ENCODE measurements at regions of chr20 and their contacts with region 1.

Region 1: GRCh38 chr20:57596998-57597939 is 23.0 kb downstream of the ZBP1 start:
- DNase-seq: peak; percentile 88
- ATAC-seq: peak; percentile 86
- H3K4me3 ChIP-seq: peak overlapping the region in 4 of 5 experiments; percentile 23 to 48 (median 35)
- H3K4me3 Mint-ChIP-seq: no peak overlapping the region
- H3K27ac ChIP-seq: no peak overlapping the region
- H3K27ac Mint-ChIP-seq: no peak overlapping the region
- H3K4me1 ChIP-seq: peaks cover 10 to 26% of the 10 kb centered on the region in 2 donors
- H3K4me1 Mint-ChIP-seq: peaks cover 18% of the 10 kb centered on the region
- H3K27me3 ChIP-seq: peaks cover 0 to 14% (median 2%) of the 10 kb centered on the region in 4 experiments
- H3K27me3 Mint-ChIP-seq: peaks cover 5% of the 10 kb centered on the region
- CTCF ChIP-seq: peak; percentile 97

Region 2: GRCh38 chr20:57351042-57351783 is 246.1 kb before region 1 on chr20 and contains the start of gene RAE1:
- CTCF ChIA-PET with region 1: interaction called, 3 read pairs
- POLR2A ChIA-PET with region 1: no interaction called
- intact Hi-C with region 1: loop called (anchors 1 kb)
- DNase-seq: peak; percentile 94
- ATAC-seq: peak; percentile 84
- H3K4me3 ChIP-seq: peak within 1 kb of the TSS; percentile 68 to 99 (median 89)
- H3K4me3 Mint-ChIP-seq: peak within 1 kb of the TSS; percentile 92
- H3K27ac ChIP-seq: peak within 1 kb of the TSS; percentile 58 to 81
- H3K27ac Mint-ChIP-seq: peak within 1 kb of the TSS; percentile 92
- H3K4me1 ChIP-seq: peaks cover 9 to 18% of the 10 kb centered on the region in 2 donors
- H3K4me1 Mint-ChIP-seq: peaks cover 22% of the 10 kb centered on the region
- H3K27me3 ChIP-seq: no peaks in the 10 kb centered on the region
- H3K27me3 Mint-ChIP-seq: no peaks in the 10 kb centered on the region
- CTCF ChIP-seq: no peak
- total RNA-seq, gene RAE1: 32.6 and 36.4 TPM in 2 replicates

Region 3: DNA sequence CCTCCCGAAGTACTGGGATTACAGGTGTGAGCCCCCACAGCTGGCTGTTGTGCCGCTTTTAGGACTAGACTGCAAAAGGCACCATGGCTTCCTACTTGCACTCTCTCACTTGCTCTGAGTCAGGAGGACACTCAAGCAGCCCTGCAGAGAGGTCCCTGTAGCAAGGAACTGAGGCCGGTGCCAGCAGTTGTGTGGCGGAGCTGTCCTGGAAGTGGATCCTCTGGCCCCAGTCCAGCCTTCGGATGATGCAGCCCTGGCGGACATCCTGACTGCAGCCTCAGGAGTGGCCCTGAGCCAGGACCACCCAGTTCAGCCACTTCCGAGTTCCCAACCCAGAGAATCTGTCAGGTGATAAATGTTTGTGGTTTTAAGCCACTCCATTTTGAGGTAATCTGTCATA is 89.8 kb before region 1 on chr20:
- CTCF ChIA-PET with region 1: interaction called, 15 read pairs
- POLR2A ChIA-PET with region 1: no interaction called
- intact Hi-C with region 1: no loop called
- DNase-seq: no peak
- ATAC-seq: no peak
- H3K4me3 ChIP-seq: no peak overlapping the region
- H3K4me3 Mint-ChIP-seq: no peak overlapping the region
- H3K27ac ChIP-seq: no peak overlapping the region
- H3K27ac Mint-ChIP-seq: no peak overlapping the region
- H3K4me1 ChIP-seq: peaks cover 23 to 32% of the 10 kb centered on the region in 2 donors
- H3K4me1 Mint-ChIP-seq: peaks cover 31% of the 10 kb centered on the region
- H3K27me3 ChIP-seq: peaks cover 0 to 4% (median 0%) of the 10 kb centered on the region in 4 experiments
- H3K27me3 Mint-ChIP-seq: no peaks in the 10 kb centered on the region
- CTCF ChIP-seq: no peak

Region 4: DNA sequence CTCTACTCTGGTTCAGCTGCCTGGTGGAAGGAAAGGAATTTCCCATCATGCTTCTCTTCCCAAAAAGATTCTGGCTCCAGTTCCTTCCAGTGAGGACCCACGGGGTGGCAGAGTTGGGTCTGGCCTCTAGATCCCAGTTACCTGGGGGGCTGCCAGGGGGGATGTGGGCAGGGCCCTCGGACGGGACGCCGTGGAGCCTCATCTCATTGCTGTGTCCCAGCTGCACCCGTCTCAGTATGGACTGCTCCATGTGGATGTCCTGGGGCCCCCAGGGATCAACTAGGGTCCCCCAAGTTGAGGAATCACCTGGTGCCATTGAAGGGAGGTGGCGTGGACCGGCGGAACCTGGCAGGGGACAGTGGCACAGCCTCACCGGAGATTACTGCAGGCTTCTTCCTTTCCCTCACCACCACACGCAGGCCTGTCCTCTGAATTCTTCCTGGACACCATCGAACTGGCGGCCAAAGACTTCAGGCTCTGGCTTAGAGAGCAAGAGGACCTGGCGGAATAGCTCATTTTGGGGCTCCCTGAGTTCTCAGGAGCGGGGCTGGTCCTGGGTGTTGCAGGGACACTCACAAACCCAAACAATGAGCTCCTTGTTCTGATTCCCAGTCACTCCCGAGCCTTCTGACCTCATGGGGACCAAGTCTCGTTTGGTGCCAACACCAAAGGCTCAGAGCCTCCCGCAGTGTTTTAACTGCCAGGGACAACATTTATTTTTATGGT is 14.5 kb after region 1 on chr20:
- CTCF ChIA-PET with region 1: interaction called, 131 read pairs
- POLR2A ChIA-PET with region 1: interaction called, 3 read pairs
- intact Hi-C with region 1: no loop called
- DNase-seq: no peak
- ATAC-seq: no peak
- H3K4me3 ChIP-seq: no peak overlapping the region
- H3K4me3 Mint-ChIP-seq: no peak overlapping the region
- H3K27ac ChIP-seq: no peak overlapping the region
- H3K27ac Mint-ChIP-seq: no peak overlapping the region
- H3K4me1 ChIP-seq: peaks cover 5 to 15% of the 10 kb centered on the region in 2 donors
- H3K4me1 Mint-ChIP-seq: peaks cover 17% of the 10 kb centered on the region
- H3K27me3 ChIP-seq: no peaks in the 10 kb centered on the region
- H3K27me3 Mint-ChIP-seq: no peaks in the 10 kb centered on the region
- CTCF ChIP-seq: no peak

Region 5: GRCh38 chr20:57654363-57654997 is 57.2 kb after region 1 on chr20:
- CTCF ChIA-PET with region 1: interaction called, 24 read pairs
- POLR2A ChIA-PET with region 1: no interaction called
- intact Hi-C with region 1: loop called (anchors 1 kb)
- DNase-seq: peak; percentile 85
- ATAC-seq: peak; percentile 94
- H3K4me3 ChIP-seq: no peak overlapping the region
- H3K4me3 Mint-ChIP-seq: no peak overlapping the region
- H3K27ac ChIP-seq: no peak overlapping the region
- H3K27ac Mint-ChIP-seq: no peak overlapping the region
- H3K4me1 ChIP-seq: peaks cover 4 to 18% of the 10 kb centered on the region in 2 donors
- H3K4me1 Mint-ChIP-seq: peaks cover 34% of the 10 kb centered on the region
- H3K27me3 ChIP-seq: no peaks in the 10 kb centered on the region
- H3K27me3 Mint-ChIP-seq: no peaks in the 10 kb centered on the region
- CTCF ChIP-seq: peak; percentile 95

Region 6: DNA sequence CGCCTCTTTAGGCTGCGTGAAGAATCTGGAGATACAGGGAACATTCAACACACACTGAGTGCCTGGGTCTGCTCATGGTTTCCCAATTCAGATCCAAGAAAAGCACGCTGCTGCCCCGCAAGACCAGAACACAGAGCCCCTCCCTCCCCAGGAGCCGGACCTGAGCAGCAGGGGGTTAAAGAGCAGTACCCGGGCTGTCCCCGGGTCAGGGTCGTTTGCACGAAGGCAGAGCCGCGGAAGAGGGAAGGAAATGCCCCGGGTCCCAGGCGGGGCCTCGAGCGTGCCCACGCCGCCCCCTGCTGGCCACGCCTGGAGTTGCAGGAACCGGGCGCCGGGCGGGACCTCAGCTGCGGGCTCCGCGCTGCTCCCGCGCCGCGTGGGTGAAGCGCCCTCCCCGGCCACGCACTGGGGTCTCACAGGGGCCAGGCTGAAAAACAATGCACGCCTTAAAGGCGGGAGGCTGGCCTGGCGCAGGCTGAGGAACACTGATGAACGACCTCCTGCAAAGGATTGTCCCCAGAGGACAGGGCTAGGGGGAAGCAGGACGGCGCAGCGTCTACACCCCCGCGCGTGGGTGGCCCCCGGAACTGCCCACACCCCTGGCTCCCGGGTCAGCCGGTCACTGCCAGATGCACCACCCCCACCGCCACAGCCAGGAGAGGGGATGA is 582.3 kb after region 1 on chr20:
- CTCF ChIA-PET with region 1: interaction called, 91 read pairs
- POLR2A ChIA-PET with region 1: no interaction called
- intact Hi-C with region 1: no loop called
- DNase-seq: peak; percentile 79
- ATAC-seq: peak; percentile 90
- H3K4me3 ChIP-seq: peak overlapping the region in 2 of 5 experiments; percentile 15 to 25
- H3K4me3 Mint-ChIP-seq: peak overlapping the region; percentile 34
- H3K27ac ChIP-seq: no peak overlapping the region
- H3K27ac Mint-ChIP-seq: no peak overlapping the region
- H3K4me1 ChIP-seq: peaks cover 10 to 14% of the 10 kb centered on the region in 2 donors
- H3K4me1 Mint-ChIP-seq: peaks cover 9% of the 10 kb centered on the region
- H3K27me3 ChIP-seq: peaks cover 0 to 47% (median 15%) of the 10 kb centered on the region in 4 experiments
- H3K27me3 Mint-ChIP-seq: peaks cover 49% of the 10 kb centered on the region
- CTCF ChIP-seq: peak; percentile 100

Measured in B cell (primary cell).